Posterior vena cava (tissue), 2 donors: ENCODE measurements at regions of chr13 and their contacts with region 1.

Region 1: DNA sequence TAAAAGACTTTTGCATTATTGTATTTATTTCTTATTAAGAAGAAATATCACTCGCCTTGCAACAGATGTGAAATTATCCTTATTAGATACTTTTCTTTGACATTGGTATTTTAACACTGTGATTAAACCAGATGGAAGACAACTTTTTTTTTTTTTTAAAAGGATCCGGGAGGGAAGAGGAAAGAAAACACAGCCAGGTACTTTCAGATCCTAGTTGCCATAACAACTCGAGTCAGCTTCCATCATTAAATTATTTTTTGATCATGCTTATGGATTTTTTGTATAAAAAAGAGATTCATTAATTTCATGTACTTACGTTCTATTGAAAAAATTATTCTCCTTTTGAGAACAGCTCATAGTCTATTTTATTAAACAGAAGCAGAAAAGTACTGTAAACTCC is 515.7 kb downstream of the TBC1D4 start:
- DNase-seq: no peak

Region 2: GRCh38 chr13:74886502-74886901 is 79.8 kb before region 1 on chr13:
- intact Hi-C with region 1: loop called in 1 of 2 experiments (anchors 2 kb)
- DNase-seq: no peak

Region 3: DNA sequence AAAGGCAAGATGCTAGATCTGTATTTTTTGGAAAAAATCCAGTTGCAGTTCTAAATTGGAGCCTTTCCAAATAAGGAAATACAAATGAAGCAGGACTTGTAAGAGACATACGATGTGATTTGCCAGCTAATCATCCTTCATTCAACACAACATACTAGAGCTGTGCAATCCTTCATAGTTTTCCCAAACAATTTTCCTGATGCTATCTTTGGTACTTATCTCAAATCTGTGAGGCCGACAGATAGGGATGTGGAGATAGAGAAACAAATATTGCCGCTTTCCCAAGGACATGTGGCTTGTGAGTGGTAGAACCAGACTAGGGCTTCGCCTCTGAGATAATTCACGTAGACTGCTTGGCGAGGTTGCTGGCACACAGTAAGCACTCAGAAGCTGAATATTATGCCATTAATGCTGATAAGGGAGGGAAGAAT is 846.5 kb after region 1 on chr13:
- intact Hi-C with region 1: no loop called
- DNase-seq: no peak